Common myeloid progenitor, CD34-positive (primary cell): ENCODE measurements at regions of chr3 and their contacts with region 1.

Region 1: DNA sequence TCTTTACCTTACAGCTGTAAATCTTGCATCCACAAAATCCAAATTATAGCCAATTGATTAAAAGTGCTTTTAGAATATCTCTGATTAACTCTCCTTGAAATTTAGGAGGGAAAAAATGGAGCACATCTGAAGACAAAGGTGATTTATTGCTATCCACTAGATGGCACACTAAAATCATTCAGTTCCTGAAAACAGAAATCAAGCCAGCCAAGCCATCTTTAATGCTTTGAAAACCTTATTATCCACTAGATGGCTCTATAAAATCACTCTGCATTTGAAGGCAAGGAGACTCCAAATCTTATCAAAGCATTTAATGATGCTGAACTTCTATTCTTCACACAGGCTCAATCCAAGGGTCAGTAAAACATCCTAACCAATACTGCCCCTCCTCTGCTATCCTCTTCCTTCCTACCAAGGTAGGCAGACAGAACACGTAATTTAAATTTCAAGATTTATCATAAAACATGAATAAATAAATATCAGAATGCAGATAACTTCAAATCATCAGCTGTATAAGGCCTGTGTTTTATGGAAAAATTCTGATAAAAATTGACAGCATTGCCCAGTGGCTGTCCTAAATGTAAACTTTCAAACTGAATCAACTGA is 48.4 kb downstream of the GOLIM4 start:
- DNase-seq: peak; percentile 85 to 91 (median 88)
- H3K4me3 ChIP-seq: no peak overlapping the region
- H3K27ac ChIP-seq: no peak overlapping the region
- H3K4me1 ChIP-seq: peaks cover 0 to 12% (median 7%) of the 10 kb centered on the region in 4 experiments
- H3K27me3 ChIP-seq: no peaks in the 10 kb centered on the region

Region 2: DNA sequence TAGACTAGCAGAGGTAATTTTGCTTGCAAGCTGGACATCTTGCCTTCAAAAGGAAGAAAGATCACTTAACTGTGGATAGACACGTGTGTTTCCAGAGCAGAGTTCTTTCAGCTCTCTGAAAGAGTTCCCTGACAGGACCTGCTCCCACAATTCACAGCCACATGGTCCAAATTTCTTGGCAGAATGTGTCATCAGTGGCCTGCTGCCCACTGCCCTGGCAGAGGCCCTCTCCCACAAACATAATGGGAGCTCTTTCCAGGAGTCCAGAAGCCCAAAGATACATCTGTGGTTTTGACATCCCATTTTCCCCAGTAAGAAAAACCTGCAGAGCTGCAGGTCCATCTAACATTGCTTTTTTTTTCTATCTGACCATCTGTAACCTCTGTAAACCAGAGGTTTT is 263.5 kb before region 1 on chr3:
- CTCF ChIA-PET with region 1: no interaction called
- POLR2A ChIA-PET with region 1: no interaction called
- DNase-seq: no peak
- H3K4me3 ChIP-seq: no peak overlapping the region
- H3K27ac ChIP-seq: no peak overlapping the region
- H3K4me1 ChIP-seq: no peaks in the 10 kb centered on the region
- H3K27me3 ChIP-seq: no peaks in the 10 kb centered on the region

Region 3: GRCh38 chr3:167929968-167930367 is 117.3 kb before region 1 on chr3:
- CTCF ChIA-PET with region 1: interaction called, 99 read pairs
- POLR2A ChIA-PET with region 1: no interaction called
- DNase-seq: no peak
- H3K4me3 ChIP-seq: no peak overlapping the region
- H3K27ac ChIP-seq: no peak overlapping the region
- H3K4me1 ChIP-seq: no peaks in the 10 kb centered on the region
- H3K27me3 ChIP-seq: no peaks in the 10 kb centered on the region

Region 4: DNA sequence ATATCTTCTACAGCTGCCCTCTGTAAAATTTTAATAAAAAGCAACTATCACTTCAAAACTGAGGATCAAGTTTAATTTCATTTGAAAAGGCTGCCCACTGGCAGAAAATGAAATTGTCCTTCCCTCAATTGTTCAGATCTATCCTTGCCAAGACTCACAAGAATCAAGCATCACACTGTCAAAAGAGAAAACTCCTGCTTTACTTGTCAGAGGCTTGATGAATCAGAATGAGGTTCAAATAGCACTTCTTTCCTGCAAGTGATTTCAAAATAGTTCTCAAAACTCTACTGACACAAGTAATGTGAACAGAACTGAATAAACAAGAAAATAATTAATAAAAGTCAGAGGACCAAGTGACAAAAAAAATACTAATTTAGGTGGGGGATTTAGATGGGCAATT is 22.2 kb before region 1 on chr3:
- CTCF ChIA-PET with region 1: interaction called, 12 read pairs
- POLR2A ChIA-PET with region 1: no interaction called
- DNase-seq: peak in 1 of 3 donors; percentile 5
- H3K4me3 ChIP-seq: peak overlapping the region in 1 of 7 experiments; percentile 5
- H3K27ac ChIP-seq: no peak overlapping the region
- H3K4me1 ChIP-seq: peaks cover 0 to 15% (median 6%) of the 10 kb centered on the region in 4 experiments
- H3K27me3 ChIP-seq: no peaks in the 10 kb centered on the region

Region 5: GRCh38 chr3:168061332-168061996 is 14.2 kb after region 1 on chr3:
- CTCF ChIA-PET with region 1: interaction called, 31 read pairs
- POLR2A ChIA-PET with region 1: no interaction called
- DNase-seq: peak in 2 of 3 donors; percentile 19 to 33
- H3K4me3 ChIP-seq: no peak overlapping the region
- H3K27ac ChIP-seq: no peak overlapping the region
- H3K4me1 ChIP-seq: peaks cover 6 to 28% (median 14%) of the 10 kb centered on the region in 4 experiments
- H3K27me3 ChIP-seq: no peaks in the 10 kb centered on the region

Region 6: DNA sequence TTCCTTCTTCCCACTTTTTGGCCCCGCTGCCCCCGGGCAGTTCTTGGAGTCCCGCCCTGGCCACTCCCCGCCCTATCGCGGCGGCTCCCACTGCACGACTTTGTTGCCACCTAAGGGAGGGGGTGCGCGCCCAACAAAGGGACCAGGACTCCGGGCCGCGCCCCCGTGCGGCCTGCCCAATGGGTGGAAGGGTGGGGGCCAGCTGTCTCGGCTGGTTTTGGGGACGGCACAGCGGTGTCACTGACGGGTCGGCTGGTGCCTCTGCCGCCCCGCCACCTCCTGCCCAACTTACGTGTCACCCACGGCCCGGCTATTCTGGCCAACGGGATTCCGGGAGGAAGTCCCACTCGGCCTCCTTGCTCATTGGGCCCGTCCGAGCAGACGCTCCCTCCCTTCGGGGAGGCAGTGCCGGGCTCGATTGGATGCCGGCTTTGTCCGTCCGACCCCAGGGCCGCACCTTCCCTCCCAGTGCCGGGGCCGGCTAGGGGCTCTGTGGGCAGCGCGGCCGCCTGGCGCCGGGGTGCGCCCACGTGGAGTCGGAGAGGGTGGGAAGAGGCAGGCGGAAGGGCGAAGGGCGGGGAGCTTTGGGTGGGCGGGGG is 48.4 kb after region 1 on chr3 and contains the start of gene GOLIM4:
- CTCF ChIA-PET with region 1: interaction called, 22 read pairs
- POLR2A ChIA-PET with region 1: no interaction called
- DNase-seq: peak; percentile 97 to 99 (median 98)
- H3K4me3 ChIP-seq: peak within 1 kb of the TSS; percentile 80 to 89 (median 84)
- H3K27ac ChIP-seq: peak within 1 kb of the TSS; percentile 40 to 79
- H3K4me1 ChIP-seq: peaks cover 15 to 52% (median 35%) of the 10 kb centered on the region in 4 experiments
- H3K27me3 ChIP-seq: no peaks in the 10 kb centered on the region

Region 7: GRCh38 chr3:168165390-168166269 is 118.3 kb after region 1 on chr3:
- CTCF ChIA-PET with region 1: interaction called, 270 read pairs
- POLR2A ChIA-PET with region 1: no interaction called
- DNase-seq: peak; percentile 77 to 83 (median 80)
- H3K4me3 ChIP-seq: peak overlapping the region in 5 of 7 experiments; percentile 37 to 72 (median 44)
- H3K27ac ChIP-seq: peak overlapping the region in 1 of 2 experiments; percentile 55
- H3K4me1 ChIP-seq: peaks cover 3 to 11% (median 5%) of the 10 kb centered on the region in 4 experiments
- H3K27me3 ChIP-seq: no peaks in the 10 kb centered on the region